ENCODE measurements at regions of chr18 and their contacts with region 1.

Region 1: GRCh38 chr18:25832001-25832604 is 258.3 kb downstream of the SS18 start:
- DNase-seq: peak; percentile 55
- H3K4me3 ChIP-seq: no peak overlapping the region
- H3K27ac ChIP-seq: no peak overlapping the region
- H3K4me1 ChIP-seq: peaks cover 20% of the 10 kb centered on the region
- CTCF ChIP-seq: peak; percentile 97

Region 2: GRCh38 chr18:24878289-24878688 is 953.8 kb before region 1 on chr18:
- CTCF ChIA-PET with region 1: no interaction called
- POLR2A ChIA-PET with region 1: no interaction called
- intact Hi-C with region 1: loop called (anchors 5 kb)
- DNase-seq: peak; percentile 61
- H3K4me3 ChIP-seq: no peak overlapping the region
- H3K27ac ChIP-seq: no peak overlapping the region
- H3K4me1 ChIP-seq: no peaks in the 10 kb centered on the region
- CTCF ChIP-seq: peak; percentile 92

Region 3: DNA sequence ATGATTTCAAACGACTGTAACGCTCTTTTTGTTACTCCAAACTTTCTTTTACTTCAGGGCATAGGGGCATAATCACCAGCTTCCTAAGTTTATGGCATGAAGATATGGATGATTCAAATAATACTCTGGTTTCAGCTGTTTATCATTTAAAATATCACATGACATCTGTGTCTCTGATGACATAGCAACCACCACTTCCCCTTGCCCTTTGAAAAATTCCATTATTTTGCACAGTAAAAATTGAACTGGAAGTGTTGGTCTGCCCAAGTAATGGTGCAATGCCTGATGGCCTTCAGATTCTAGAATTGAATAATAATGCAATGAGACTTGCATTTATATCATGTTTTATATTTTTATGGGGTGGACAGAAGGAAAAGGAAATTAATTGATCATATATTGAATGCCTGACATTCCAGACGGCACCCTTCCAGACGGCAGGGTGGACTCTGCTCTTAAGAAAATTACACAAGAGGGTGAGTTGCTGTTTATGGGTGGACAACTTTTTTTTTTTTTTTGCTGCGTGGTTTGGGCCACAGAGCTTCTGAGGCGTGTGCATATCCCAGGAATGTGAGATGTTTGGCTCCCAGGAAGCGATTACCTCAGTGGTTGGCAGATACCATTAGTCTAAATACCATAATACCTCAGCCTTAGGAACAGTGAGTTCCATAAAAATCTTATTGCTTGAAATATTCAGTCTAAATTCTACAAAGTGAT is 378.4 kb before region 1 on chr18:
- CTCF ChIA-PET with region 1: no interaction called
- POLR2A ChIA-PET with region 1: no interaction called
- intact Hi-C with region 1: loop called (anchors 10 kb)
- DNase-seq: no peak
- H3K4me3 ChIP-seq: no peak overlapping the region
- H3K27ac ChIP-seq: no peak overlapping the region
- H3K4me1 ChIP-seq: no peaks in the 10 kb centered on the region
- CTCF ChIP-seq: no peak

Region 4: GRCh38 chr18:25764777-25765176 is 67.3 kb before region 1 on chr18:
- CTCF ChIA-PET with region 1: no interaction called
- POLR2A ChIA-PET with region 1: no interaction called
- intact Hi-C with region 1: loop called (anchors 10 kb)
- DNase-seq: no peak
- H3K4me3 ChIP-seq: no peak overlapping the region
- H3K27ac ChIP-seq: no peak overlapping the region
- H3K4me1 ChIP-seq: no peaks in the 10 kb centered on the region
- CTCF ChIP-seq: no peak

Region 5: GRCh38 chr18:25935356-25935755 is 103.3 kb after region 1 on chr18:
- CTCF ChIA-PET with region 1: no interaction called
- POLR2A ChIA-PET with region 1: no interaction called
- intact Hi-C with region 1: no loop called
- DNase-seq: no peak
- H3K4me3 ChIP-seq: no peak overlapping the region
- H3K27ac ChIP-seq: no peak overlapping the region
- H3K4me1 ChIP-seq: no peaks in the 10 kb centered on the region
- CTCF ChIP-seq: no peak

Region 6: DNA sequence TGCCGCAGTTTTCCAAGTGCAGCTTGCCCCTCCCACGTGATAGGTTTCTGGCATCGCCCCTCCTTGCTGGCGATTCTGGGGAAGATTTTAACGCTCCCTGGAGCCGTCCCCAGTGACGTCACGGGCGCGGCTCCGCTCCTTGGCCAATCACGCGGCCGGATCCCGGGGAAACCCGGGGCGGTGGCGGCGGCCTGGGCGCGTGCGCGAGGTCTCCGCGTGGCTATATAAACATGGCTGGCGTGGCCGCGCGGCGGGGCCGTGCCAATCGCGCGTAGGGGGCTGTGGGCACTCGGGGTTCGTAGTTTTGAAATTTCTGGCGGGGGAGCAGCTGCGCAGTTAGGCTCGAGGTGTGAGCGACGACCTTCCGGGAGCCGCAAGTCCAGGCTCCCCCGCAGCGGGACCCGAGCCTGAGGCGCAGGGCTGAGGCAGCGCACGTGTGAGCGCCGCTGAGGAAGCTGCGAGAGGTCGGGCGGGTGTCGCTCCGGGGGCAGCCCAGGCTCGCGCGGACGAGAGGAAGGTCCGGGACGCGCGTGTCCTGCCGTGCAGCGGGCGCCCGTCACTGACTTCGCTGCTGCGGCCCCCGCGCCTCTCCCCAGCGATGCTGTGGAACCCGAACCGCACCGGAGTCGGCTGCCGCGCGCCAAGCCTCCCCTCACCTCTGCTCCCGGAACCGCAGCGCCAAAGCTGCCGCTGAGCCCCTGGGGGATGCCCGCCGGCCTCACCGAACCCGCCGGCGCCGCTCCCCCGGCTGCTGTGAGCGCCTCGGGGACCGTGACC is 394.3 kb after region 1 on chr18 and contains the start of gene TAF4B:
- CTCF ChIA-PET with region 1: no interaction called
- POLR2A ChIA-PET with region 1: no interaction called
- intact Hi-C with region 1: no loop called
- DNase-seq: peak; percentile 95
- H3K4me3 ChIP-seq: peak within 1 kb of the TSS; percentile 80
- H3K27ac ChIP-seq: peak within 1 kb of the TSS; percentile 62
- H3K4me1 ChIP-seq: peaks cover 37% of the 10 kb centered on the region
- CTCF ChIP-seq: no peak
- total RNA-seq, gene TAF4B: 48.7 and 52.3 TPM in 2 replicates

Measured in OCI-LY7 (cell line).